ENCODE measurements at regions of chr10 and their contacts with region 1.

Region 1: DNA sequence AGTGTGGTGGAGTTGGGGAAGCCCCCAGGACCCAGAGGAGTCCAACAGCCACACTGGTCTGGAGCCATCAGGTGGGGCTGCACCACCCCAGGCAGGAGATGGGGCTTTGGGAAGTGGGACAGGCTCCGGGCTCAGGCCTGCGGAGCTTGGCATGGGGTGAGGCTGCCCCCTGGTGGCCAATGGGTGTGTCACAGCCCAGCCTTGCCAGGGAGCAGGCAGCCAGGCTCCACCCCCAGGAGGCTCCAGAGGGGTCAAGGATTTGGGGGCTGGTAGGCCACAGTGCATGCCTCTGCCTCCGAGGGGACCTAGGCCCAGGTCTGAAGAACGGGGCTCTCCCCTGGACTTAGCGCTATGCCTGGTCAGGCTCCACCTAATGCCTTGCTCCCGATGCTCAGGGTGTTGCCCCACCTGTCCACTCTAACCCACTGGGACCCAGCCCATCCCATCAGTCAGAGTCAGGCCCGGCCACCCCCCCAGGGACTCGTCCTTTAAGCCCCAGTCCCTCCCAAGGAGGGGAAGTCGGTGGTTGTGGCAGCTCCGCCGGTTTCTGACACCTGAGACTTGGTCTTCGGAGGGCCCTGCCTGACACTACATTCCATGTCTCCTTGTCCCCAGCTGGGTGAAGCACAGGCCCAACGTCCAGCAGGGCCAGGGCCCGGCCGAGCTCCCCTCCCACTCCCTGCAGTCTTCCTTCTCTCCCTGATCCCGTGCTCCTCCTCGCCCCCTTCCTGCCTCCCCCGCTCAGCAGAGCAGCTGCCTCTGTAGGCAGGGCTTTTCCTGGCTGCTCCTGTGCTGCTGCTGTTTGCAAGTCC is 11.3 kb upstream of the SAMD8 start:
- DNase-seq: peak; percentile 93

Region 2: GRCh38 chr10:74244097-74244685 is 856.0 kb before region 1 on chr10:
- intact Hi-C with region 1: loop called in 1 of 2 experiments (anchors 10 kb)
- DNase-seq: no peak

Region 3: DNA sequence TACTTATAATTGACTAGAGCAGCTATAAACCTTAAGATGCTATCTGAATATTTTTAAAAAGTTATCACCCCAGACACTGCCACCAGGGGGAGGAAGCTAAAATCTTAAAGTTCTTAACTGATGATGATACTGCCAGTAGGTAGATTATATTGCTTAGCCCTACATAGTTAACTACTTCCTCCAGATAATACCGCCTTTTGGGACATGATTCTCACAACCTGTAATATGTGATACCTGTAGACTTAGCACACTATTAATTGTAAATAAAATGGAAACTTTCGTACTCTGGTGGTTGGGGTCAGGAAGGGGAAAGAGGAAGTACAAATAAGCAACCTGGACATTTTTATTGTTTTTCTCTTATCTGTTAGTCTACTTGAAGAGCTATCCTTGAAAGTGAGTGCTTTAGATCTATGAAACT is 680.2 kb before region 1 on chr10:
- intact Hi-C with region 1: loop called in 1 of 2 experiments (anchors 10 kb)
- DNase-seq: no peak

Region 4: GRCh38 chr10:74753442-74754211 is 346.5 kb before region 1 on chr10:
- intact Hi-C with region 1: loop called in 1 of 2 experiments (anchors 10 kb)
- DNase-seq: no peak

Region 5: GRCh38 chr10:75210282-75211006 is 110.3 kb after region 1 on chr10 and contains the start of gene VDAC2:
- intact Hi-C with region 1: no loop called
- DNase-seq: peak; percentile 98
- total RNA-seq, gene VDAC2: 115 to 146 TPM

Region 6: DNA sequence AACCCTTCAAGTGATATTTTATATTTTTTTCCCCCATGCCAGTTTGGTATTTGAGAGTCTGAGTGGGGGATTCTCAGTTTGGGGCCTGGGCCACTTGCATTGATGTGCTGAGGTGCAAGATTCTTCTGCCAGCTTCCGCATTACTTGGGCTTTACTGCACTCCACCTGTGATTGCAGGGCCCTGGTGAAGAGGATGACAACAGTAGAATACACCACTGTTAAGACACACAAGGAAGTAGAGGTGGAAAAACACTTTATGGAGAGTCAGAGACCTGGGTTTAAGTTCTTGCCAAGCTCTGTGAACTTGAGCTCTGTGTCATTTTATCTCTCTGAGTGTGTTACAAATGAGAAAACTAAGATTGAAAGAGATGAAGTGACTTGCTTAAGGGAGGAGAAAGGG is 540.6 kb after region 1 on chr10:
- intact Hi-C with region 1: no loop called
- DNase-seq: no peak